CD8-positive, alpha-beta T cell (primary cell): ENCODE measurements at regions of chr16 and their contacts with region 1.

Region 1: GRCh38 chr16:30472328-30472942 is at the start of gene ITGAL:
- DNase-seq: peak; percentile 67 to 96 (median 85)
- ATAC-seq: peak; percentile 81
- H3K4me3 ChIP-seq: peak within 1 kb of the TSS; percentile 70 to 89
- H3K4me3 Mint-ChIP-seq: peak within 1 kb of the TSS; percentile 95
- H3K27ac ChIP-seq: peak within 1 kb of the TSS; percentile 80 to 83
- H3K27ac Mint-ChIP-seq: peak within 1 kb of the TSS; percentile 93
- H3K4me1 ChIP-seq: peaks cover 71% of the 10 kb centered on the region
- H3K4me1 Mint-ChIP-seq: peaks cover 68% of the 10 kb centered on the region
- H3K27me3 ChIP-seq: no peaks in the 10 kb centered on the region
- H3K27me3 Mint-ChIP-seq: no peaks in the 10 kb centered on the region
- CTCF ChIP-seq: no peak
- total RNA-seq, gene ITGAL: 187 to 218 TPM

Region 2: GRCh38 chr16:30458561-30459394 is 13.7 kb before region 1 on chr16:
- CTCF ChIA-PET with region 1: interaction called, 36 read pairs
- POLR2A ChIA-PET with region 1: interaction called, 148 read pairs
- intact Hi-C with region 1: loop called in 1 of 2 experiments (anchors 1 kb)
- DNase-seq: peak; percentile 40 to 93 (median 76)
- ATAC-seq: peak; percentile 93
- H3K4me3 ChIP-seq: peak overlapping the region; percentile 5 to 22
- H3K4me3 Mint-ChIP-seq: peak overlapping the region; percentile 66
- H3K27ac ChIP-seq: peak overlapping the region; percentile 15 to 69
- H3K27ac Mint-ChIP-seq: peak overlapping the region; percentile 89
- H3K4me1 ChIP-seq: peaks cover 26% of the 10 kb centered on the region
- H3K4me1 Mint-ChIP-seq: peaks cover 48% of the 10 kb centered on the region
- H3K27me3 ChIP-seq: no peaks in the 10 kb centered on the region
- H3K27me3 Mint-ChIP-seq: no peaks in the 10 kb centered on the region
- CTCF ChIP-seq: no peak

Region 3: GRCh38 chr16:30491744-30492308 is 19.4 kb after region 1 on chr16:
- CTCF ChIA-PET with region 1: interaction called, 8 read pairs
- POLR2A ChIA-PET with region 1: interaction called, 5 read pairs
- intact Hi-C with region 1: loop called in 1 of 2 experiments (anchors 2 kb)
- DNase-seq: peak in 7 of 9 experiments; percentile 21 to 57 (median 30)
- ATAC-seq: peak; percentile 48
- H3K4me3 ChIP-seq: no peak overlapping the region
- H3K4me3 Mint-ChIP-seq: no peak overlapping the region
- H3K27ac ChIP-seq: no peak overlapping the region
- H3K27ac Mint-ChIP-seq: peak overlapping the region; percentile 78
- H3K4me1 ChIP-seq: peaks cover 7% of the 10 kb centered on the region
- H3K4me1 Mint-ChIP-seq: peaks cover 21% of the 10 kb centered on the region
- H3K27me3 ChIP-seq: no peaks in the 10 kb centered on the region
- H3K27me3 Mint-ChIP-seq: no peaks in the 10 kb centered on the region
- CTCF ChIP-seq: no peak